ENCODE measurements at regions of chr17 and their contacts with region 1.

Region 1: GRCh38 chr17:1331708-1332107 is 52.2 kb downstream of the TRARG1 start:
- DNase-seq: no peak

Region 2: DNA sequence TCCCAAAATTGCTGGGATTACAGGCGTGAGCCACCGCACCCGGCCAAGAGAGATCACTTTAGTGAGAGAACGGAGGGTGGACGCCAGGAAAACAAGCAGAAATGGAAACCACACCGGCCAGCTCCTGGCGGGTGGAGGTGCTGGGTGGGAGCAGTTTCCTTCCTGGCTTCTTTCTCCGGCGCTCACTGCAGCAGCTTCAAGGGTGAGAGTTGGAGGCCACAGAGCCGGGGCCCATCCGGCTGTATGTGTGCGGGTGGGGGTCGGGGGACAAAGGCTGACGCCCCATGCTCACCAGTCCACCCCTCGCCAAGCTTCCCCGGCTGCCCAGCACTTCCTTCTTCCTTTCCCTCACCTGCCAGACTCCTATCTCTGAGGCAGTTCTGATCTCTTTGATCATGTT is 75.0 kb before region 1 on chr17:
- intact Hi-C with region 1: loop called in 1 of 2 experiments (anchors 5 kb)
- DNase-seq: no peak

Region 3: GRCh38 chr17:1275962-1276736 is 55.6 kb before region 1 on chr17:
- intact Hi-C with region 1: loop called (anchors 2 to 5 kb)
- DNase-seq: peak; percentile 89

Region 4: DNA sequence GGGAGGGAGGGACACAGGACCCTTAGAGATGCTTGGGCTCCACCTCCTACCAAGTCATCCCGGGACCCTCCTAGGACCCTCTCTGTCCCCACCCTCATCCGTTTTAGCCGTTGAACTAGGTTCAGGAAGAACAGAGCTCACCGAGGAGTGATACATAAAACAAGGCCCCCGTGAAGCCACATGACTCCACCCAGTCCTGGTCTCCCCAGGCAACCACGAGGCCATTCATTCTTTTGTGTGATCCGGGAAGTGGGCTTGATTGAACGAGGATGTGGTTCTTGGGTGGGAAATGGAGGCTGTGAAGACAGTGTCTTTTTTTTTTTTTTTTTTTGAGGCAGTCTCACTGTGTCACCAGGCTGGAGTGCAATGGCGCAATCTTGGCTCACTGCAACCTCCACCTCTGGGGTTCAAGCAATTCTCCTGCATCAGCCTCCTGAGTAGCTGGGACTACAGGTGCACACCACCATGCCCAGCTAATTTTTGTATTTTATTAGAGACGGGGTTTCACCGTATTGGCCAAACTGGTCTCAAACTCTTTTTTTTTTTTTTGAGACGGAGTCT is 37.5 kb before region 1 on chr17:
- intact Hi-C with region 1: loop called in 1 of 2 experiments (anchors 1 kb)
- DNase-seq: no peak

Region 5: GRCh38 chr17:1302761-1303160 is 28.9 kb before region 1 on chr17:
- intact Hi-C with region 1: loop called in 1 of 2 experiments (anchors 1 kb)
- DNase-seq: no peak

Measured in posterior vena cava (tissue), 2 donors.